Thyroid gland (tissue), 4 donors: ENCODE measurements at regions of chr14 and their contacts with region 1.

Region 1: DNA sequence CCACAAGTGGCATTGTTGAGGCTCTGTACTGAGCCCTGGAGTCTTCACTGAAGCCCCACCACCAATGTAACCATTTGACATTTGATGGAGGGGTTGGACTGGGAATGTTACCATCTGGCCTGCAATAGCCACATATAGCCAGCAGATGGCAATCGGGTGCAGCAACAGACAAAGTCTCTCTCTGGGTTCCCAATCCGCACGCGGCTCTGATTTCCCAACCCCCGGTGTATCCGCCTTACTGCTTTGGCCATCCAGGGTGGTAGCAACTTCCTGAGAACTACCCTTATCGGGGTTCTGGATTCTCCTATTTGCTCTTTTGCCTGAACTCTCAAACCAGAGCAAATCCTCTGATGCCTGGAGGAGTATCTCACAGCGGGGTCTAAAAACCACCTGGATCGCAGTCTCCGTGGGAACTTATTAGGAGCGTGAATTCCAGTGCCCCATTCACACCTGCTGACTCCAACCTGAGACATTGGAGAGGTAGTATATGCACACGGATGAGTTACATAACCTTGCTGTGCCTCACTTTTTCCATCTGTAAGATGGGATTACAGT is 14.2 kb downstream of the VRTN start:
- DNase-seq: peak; percentile 83
- H3K4me3 ChIP-seq: no peak overlapping the region
- H3K27ac ChIP-seq: no peak overlapping the region
- H3K4me1 ChIP-seq: peaks cover 0 to 4% of the 10 kb centered on the region in 2 donors
- H3K27me3 ChIP-seq: no peaks in the 10 kb centered on the region
- CTCF ChIP-seq: peak; percentile 74 to 97 (median 94)
- POLR2A ChIP-seq: no peak

Region 2: DNA sequence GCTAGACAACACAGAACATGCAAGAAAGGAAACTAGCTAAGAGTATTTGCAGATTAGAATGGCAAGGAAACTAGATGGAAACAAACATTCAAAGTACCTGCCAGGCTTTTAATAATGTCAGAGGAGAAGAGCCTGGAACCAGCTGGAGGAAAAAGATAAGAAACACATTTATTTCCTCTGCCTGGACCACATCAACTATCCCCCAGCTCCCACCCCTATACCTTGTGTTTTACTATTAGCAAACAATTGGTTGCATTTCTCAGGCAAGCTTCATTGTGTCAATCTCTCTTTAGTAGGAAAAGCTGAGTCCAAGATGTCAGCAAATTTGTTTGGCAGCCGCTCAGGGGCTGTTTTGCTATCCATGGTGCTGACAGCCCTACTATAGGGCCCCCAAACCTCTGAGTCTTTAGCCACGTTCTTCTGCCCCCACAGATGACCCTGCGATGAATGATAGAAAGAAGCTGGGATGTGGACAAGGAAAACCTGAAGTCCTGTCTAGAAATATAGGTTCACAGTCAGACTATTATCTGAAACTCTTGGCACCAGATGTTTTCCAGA is 75.1 kb after region 1 on chr14:
- intact Hi-C with region 1: no loop called
- DNase-seq: no peak
- H3K4me3 ChIP-seq: no peak overlapping the region
- H3K27ac ChIP-seq: no peak overlapping the region
- H3K4me1 ChIP-seq: no peaks in the 10 kb centered on the region
- H3K27me3 ChIP-seq: no peaks in the 10 kb centered on the region
- CTCF ChIP-seq: no peak
- POLR2A ChIP-seq: no peak

Region 3: DNA sequence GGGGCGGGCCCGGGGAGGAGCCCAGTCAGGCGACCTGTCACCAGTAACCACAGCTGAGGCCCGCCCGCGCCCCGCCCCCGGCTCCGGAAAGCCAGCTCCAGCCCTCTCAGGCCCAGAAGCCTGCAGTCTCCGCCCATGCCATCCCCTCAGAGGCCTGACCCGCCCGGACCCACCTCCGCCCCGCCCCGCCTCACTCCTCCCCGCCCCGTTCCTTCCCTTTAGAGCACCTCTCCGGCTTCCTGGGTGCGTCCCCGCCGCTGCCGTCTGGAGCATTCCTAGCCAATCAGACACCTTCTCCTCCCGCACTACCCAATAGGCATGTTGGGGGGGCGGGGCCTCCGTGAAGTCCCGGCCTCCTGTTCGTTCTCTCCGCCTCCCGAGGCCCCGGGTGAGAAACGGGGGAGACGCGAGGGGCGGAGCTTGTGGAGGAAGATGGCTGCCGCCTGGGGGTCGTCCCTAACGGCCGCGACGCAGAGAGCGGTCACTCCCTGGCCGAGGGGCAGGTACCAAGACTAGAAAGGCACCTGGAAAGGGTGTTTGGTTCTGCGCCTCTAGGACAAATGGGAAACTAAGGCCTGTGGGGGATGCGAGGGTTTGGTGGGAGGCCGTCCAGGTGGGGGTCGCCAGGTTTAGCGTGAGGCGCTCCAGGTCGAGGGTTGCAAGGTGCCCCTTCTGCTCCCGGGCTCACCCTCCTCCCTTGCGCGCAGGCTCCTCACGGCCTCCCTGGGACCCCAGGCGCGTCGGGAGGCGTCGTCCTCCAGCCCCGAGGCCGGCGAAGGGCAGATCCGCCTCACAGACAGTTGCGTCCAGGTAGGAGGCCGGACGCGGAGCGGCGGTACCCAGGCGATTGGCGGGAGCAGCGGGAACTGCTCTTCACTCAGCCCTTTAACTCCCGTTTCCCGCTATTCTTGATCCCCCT is 131.2 kb after region 1 on chr14 and contains the start of gene ISCA2:
- intact Hi-C with region 1: loop called (anchors 5 kb)
- DNase-seq: peak; percentile 100
- H3K4me3 ChIP-seq: peak within 1 kb of the TSS; percentile 45 to 99 (median 84)
- H3K27ac ChIP-seq: peak within 1 kb of the TSS; percentile 87 to 99 (median 94)
- H3K4me1 ChIP-seq: peaks cover 18 to 38% of the 10 kb centered on the region in 2 donors
- H3K27me3 ChIP-seq: no peaks in the 10 kb centered on the region
- CTCF ChIP-seq: peak in 2 of 6 experiments; percentile 1 to 10
- POLR2A ChIP-seq: peak in 1 of 2 donors; percentile 39
- total RNA-seq, gene ISCA2: 24.6 to 54.9 (median 44.2) TPM

Region 4: GRCh38 chr14:74618078-74618952 is 255.9 kb after region 1 on chr14:
- intact Hi-C with region 1: loop called (anchors 5 kb)
- DNase-seq: no peak
- H3K4me3 ChIP-seq: no peak overlapping the region
- H3K27ac ChIP-seq: no peak overlapping the region
- H3K4me1 ChIP-seq: peaks cover 5 to 49% of the 10 kb centered on the region in 2 donors
- H3K27me3 ChIP-seq: no peaks in the 10 kb centered on the region
- CTCF ChIP-seq: no peak
- POLR2A ChIP-seq: no peak